K562 (cell line): ENCODE measurements at regions of chr2 and their contacts with region 1.

Region 1: GRCh38 chr2:191155608-191156071 is 4.8 kb upstream of the STAT4 start:
- DNase-seq: peak in 2 of 4 experiments; percentile 6 to 11
- ATAC-seq: peak; percentile 64; the same call in 2 of the 3 replicates
- H3K4me3 ChIP-seq: no peak overlapping the region
- H3K27ac ChIP-seq: no peak overlapping the region
- H3K4me1 ChIP-seq: peaks cover 0 to 2% of the 10 kb centered on the region in 2 experiments; a peak in 2 of 5 replicates
- H3K27me3 ChIP-seq: peaks cover 0 to 4% of the 10 kb centered on the region in 2 experiments; a peak in 2 of 5 replicates
- CTCF ChIP-seq: peak; percentile 41 to 54 (median 42); a peak in 4 of 6 replicates
- EP300 ChIP-seq: no peak
- POLR2A ChIP-seq: no peak
- RAD21 ChIP-seq: peak; percentile 42 to 59

Region 2: DNA sequence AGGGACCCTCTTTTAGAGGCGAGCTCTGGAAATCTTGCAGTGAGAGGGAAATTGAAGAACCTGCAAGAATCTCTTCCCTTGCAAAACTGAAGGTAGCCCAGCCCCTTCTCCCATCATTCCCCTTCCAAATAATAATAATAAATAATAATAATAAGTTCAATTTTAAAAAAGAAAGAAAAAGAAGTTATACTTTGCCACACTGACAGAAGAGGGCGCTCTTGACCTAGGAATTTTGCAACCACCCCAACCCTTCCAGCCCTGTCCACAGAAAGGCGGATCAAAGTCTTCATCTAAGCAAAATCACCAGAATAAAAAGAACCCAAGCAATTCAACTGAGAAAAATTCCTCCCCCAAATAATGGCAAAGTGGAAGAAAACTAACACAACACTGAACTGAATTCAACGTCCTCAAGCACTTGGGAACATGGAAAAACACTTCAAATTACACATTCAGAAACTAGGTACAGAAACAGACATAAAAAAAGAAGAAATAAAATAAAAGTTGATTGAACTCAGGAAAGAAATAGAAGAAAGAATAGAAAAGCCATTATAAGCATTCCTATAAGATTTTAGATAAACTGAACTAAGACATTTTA is 373.9 kb before region 1 on chr2:
- CTCF ChIA-PET with region 1: no interaction called
- POLR2A ChIA-PET with region 1: no interaction called
- in situ Hi-C with region 1: no loop called
- intact Hi-C with region 1: loop called (anchors 5 kb)
- DNase-seq: peak; percentile 52 to 63 (median 56)
- ATAC-seq: peak; percentile 87
- H3K4me3 ChIP-seq: no peak overlapping the region
- H3K27ac ChIP-seq: no peak overlapping the region
- H3K4me1 ChIP-seq: no peaks in the 10 kb centered on the region; a peak in 1 of 5 replicates
- H3K27me3 ChIP-seq: no peaks in the 10 kb centered on the region
- CTCF ChIP-seq: peak; percentile 34 to 71 (median 52); a peak in 5 of 6 replicates
- EP300 ChIP-seq: no peak
- POLR2A ChIP-seq: no peak
- RAD21 ChIP-seq: peak; percentile 64 to 79

Region 3: DNA sequence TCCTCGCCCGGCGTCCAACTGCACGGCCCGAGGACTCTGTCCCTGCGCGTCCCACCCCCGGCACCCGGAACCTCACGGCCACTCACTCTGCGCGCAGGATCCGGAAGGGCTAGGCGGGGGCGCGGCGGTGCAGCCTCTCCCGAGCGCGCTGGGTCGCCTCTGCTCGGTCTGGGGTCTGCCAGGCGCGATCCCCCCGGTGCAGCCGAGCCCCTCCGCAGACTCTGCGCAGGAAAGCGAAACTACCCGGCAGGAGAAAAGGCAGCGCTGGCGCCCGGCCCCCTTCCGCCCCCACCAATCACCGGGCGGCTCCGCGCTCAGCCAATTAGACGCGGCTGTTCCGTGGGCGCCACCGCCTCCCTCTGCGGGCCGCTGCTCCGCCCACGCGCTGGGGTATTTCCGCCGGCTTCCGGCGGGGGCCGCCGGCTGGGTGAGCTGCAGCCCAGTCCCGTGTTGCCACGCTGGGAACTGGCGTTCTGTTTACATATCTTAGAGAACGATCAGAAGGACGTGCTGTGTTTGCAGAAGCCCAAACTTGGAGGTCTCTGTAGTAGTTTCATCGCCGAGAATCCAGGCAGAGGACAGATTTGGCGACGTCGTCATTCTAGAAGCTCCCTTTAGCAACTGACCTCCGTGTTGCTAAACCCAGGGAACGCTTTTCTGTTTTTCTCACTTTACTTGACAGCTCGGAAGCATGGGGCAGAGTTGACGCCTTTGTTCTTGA is 141.5 kb before region 1 on chr2 and contains the start of gene STAT1:
- CTCF ChIA-PET with region 1: no interaction called
- POLR2A ChIA-PET with region 1: no interaction called
- in situ Hi-C with region 1: no loop called
- intact Hi-C with region 1: no loop called
- DNase-seq: peak; percentile 91 to 98 (median 92)
- ATAC-seq: peak; percentile 97
- H3K4me3 ChIP-seq: peak within 1 kb of the TSS; percentile 92
- H3K27ac ChIP-seq: peak within 1 kb of the TSS; percentile 92
- H3K4me1 ChIP-seq: peaks cover 5 to 8% of the 10 kb centered on the region in 2 experiments
- H3K27me3 ChIP-seq: no peaks in the 10 kb centered on the region
- CTCF ChIP-seq: peak in 2 of 3 experiments; percentile 8 to 31; a peak in 2 of 6 replicates
- EP300 ChIP-seq: peak; percentile 91
- POLR2A ChIP-seq: peak; percentile 83
- RAD21 ChIP-seq: no peak
- polyA plus RNA-seq, gene STAT1: 8.7 to 8.8 TPM

Region 4: GRCh38 chr2:191051825-191052778 is 103.5 kb before region 1 on chr2:
- CTCF ChIA-PET with region 1: no interaction called
- POLR2A ChIA-PET with region 1: no interaction called
- in situ Hi-C with region 1: no loop called
- intact Hi-C with region 1: loop called (anchors 1 kb)
- DNase-seq: peak; percentile 14 to 43 (median 19)
- ATAC-seq: peak; percentile 76
- H3K4me3 ChIP-seq: no peak overlapping the region
- H3K27ac ChIP-seq: no peak overlapping the region
- H3K4me1 ChIP-seq: no peaks in the 10 kb centered on the region
- H3K27me3 ChIP-seq: peaks cover 0 to 2% of the 10 kb centered on the region in 2 experiments; a peak in 2 of 5 replicates
- CTCF ChIP-seq: peak; percentile 42 to 72 (median 43); a peak in 4 of 6 replicates
- EP300 ChIP-seq: no peak
- POLR2A ChIP-seq: no peak
- RAD21 ChIP-seq: peak; percentile 63 to 67